ENCODE measurements at regions of chr9 and their contacts with region 1.

Region 1: GRCh38 chr9:105881654-105882349 is 187.5 kb downstream of the TMEM38B start:
- DNase-seq: peak; percentile 76
- H3K4me3 Mint-ChIP-seq: no peak overlapping the region
- H3K27ac Mint-ChIP-seq: no peak overlapping the region
- H3K4me1 Mint-ChIP-seq: peaks cover 5% of the 10 kb centered on the region
- H3K27me3 Mint-ChIP-seq: no peaks in the 10 kb centered on the region

Region 2: GRCh38 chr9:105064315-105065097 is 817.3 kb before region 1 on chr9:
- CTCF ChIA-PET with region 1: no interaction called
- POLR2A ChIA-PET with region 1: no interaction called
- intact Hi-C with region 1: no loop called
- DNase-seq: no peak
- H3K4me3 Mint-ChIP-seq: no peak overlapping the region
- H3K27ac Mint-ChIP-seq: no peak overlapping the region
- H3K4me1 Mint-ChIP-seq: peaks cover 13% of the 10 kb centered on the region
- H3K27me3 Mint-ChIP-seq: peaks cover 6% of the 10 kb centered on the region

Region 3: GRCh38 chr9:105608721-105609598 is 272.8 kb before region 1 on chr9:
- CTCF ChIA-PET with region 1: interaction called, 4 read pairs
- POLR2A ChIA-PET with region 1: no interaction called
- intact Hi-C with region 1: loop called (anchors 1 kb)
- DNase-seq: no peak
- H3K4me3 Mint-ChIP-seq: no peak overlapping the region
- H3K27ac Mint-ChIP-seq: no peak overlapping the region
- H3K4me1 Mint-ChIP-seq: no peaks in the 10 kb centered on the region
- H3K27me3 Mint-ChIP-seq: no peaks in the 10 kb centered on the region

Region 4: GRCh38 chr9:105842023-105842644 is 39.7 kb before region 1 on chr9:
- CTCF ChIA-PET with region 1: interaction called, 62 read pairs
- POLR2A ChIA-PET with region 1: interaction called, 3 read pairs
- intact Hi-C with region 1: loop called (anchors 1 kb)
- DNase-seq: peak; percentile 28
- H3K4me3 Mint-ChIP-seq: no peak overlapping the region
- H3K27ac Mint-ChIP-seq: no peak overlapping the region
- H3K4me1 Mint-ChIP-seq: no peaks in the 10 kb centered on the region
- H3K27me3 Mint-ChIP-seq: no peaks in the 10 kb centered on the region

Measured in activated CD4-positive, alpha-beta memory T cell treated with anti-CD3 and anti-CD28 coated beads for 36 hours (primary cell).